Mucosa of descending colon (tissue), 3 donors: ENCODE measurements at regions of chr6 and their contacts with region 1.

Region 1: GRCh38 chr6:151330134-151330696 is 61.1 kb downstream of the ZBTB2 start:
- DNase-seq: no peak
- ATAC-seq: no peak
- H3K4me3 ChIP-seq: no peak overlapping the region
- H3K4me1 ChIP-seq: no peaks in the 10 kb centered on the region
- CTCF ChIP-seq: no peak

Region 2: GRCh38 chr6:150891888-150892485 is 438.2 kb before region 1 on chr6:
- intact Hi-C with region 1: loop called (anchors 5 to 10 kb)
- DNase-seq: peak in 2 of 3 donors; percentile 72 to 82
- ATAC-seq: peak; percentile 82
- H3K4me3 ChIP-seq: no peak overlapping the region
- H3K4me1 ChIP-seq: no peaks in the 10 kb centered on the region
- CTCF ChIP-seq: peak; percentile 75

Region 3: GRCh38 chr6:151160929-151161757 is 169.1 kb before region 1 on chr6:
- intact Hi-C with region 1: no loop called
- DNase-seq: no peak
- ATAC-seq: peak; percentile 55
- H3K4me3 ChIP-seq: no peak overlapping the region
- H3K4me1 ChIP-seq: no peaks in the 10 kb centered on the region
- CTCF ChIP-seq: no peak